CD4-positive, alpha-beta memory T cell (primary cell): ENCODE measurements at regions of chr12 and their contacts with region 1.

Region 1: GRCh38 chr12:112012775-112013600 is at the starts of genes ERP29 and TMEM116:
- DNase-seq: peak; percentile 98 to 100 (median 99)
- H3K4me3 ChIP-seq: peak within 1 kb of the TSS; percentile 94 to 99
- H3K4me3 Mint-ChIP-seq: peak within 1 kb of the TSS; percentile 87 to 98 (median 94)
- H3K27ac ChIP-seq: peak within 1 kb of the TSS; percentile 97
- H3K27ac Mint-ChIP-seq: peak within 1 kb of the TSS; percentile 96 to 99 (median 99)
- H3K4me1 ChIP-seq: peaks cover 79% of the 10 kb centered on the region
- H3K4me1 Mint-ChIP-seq: peaks cover 39 to 73% (median 56%) of the 10 kb centered on the region in 4 donors
- H3K27me3 ChIP-seq: no peaks in the 10 kb centered on the region
- H3K27me3 Mint-ChIP-seq: no peaks in the 10 kb centered on the region
- total RNA-seq, gene ERP29: 183 to 184 TPM
- total RNA-seq, gene TMEM116: 47.3 to 50.6 TPM

Region 2: GRCh38 chr12:111841750-111842555 is 171.0 kb before region 1 on chr12 and contains the start of gene MAPKAPK5:
- CTCF ChIA-PET with region 1: interaction called, 4 read pairs
- POLR2A ChIA-PET with region 1: interaction called, 29 read pairs
- intact Hi-C with region 1: loop called (anchors 2 kb)
- DNase-seq: peak; percentile 96 to 99 (median 97)
- H3K4me3 ChIP-seq: peak within 1 kb of the TSS; percentile 95 to 97
- H3K4me3 Mint-ChIP-seq: peak within 1 kb of the TSS; percentile 96 to 99 (median 99)
- H3K27ac ChIP-seq: peak within 1 kb of the TSS; percentile 84
- H3K27ac Mint-ChIP-seq: peak within 1 kb of the TSS; percentile 98 to 100 (median 100)
- H3K4me1 ChIP-seq: peaks cover 46% of the 10 kb centered on the region
- H3K4me1 Mint-ChIP-seq: peaks cover 42 to 80% (median 58%) of the 10 kb centered on the region in 4 donors
- H3K27me3 ChIP-seq: no peaks in the 10 kb centered on the region
- H3K27me3 Mint-ChIP-seq: peaks cover 0 to 1% of the 10 kb centered on the region in 2 donors
- total RNA-seq, gene MAPKAPK5: 59.6 to 68.1 TPM

Region 3: DNA sequence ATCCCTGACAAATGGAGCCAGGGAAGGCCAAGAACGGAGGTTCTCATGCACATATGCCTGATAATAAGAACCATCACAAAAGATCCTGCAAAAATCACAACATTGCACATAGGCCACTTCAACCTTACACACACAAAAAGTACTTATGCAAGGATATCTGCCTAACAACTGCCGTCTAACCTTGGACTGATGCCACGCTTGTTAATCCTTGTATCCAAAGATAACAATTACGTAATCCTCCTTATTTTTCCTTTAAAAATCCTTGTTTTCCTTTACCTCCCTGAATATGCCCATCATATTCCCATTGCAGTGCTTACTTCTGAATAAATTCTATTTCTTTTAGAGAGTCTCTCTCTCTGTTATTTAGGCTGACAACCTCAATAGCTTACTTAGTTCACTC is 59.5 kb before region 1 on chr12:
- CTCF ChIA-PET with region 1: interaction called, 7 read pairs
- POLR2A ChIA-PET with region 1: interaction called, 37 read pairs
- intact Hi-C with region 1: no loop called
- DNase-seq: no peak
- H3K4me3 ChIP-seq: no peak overlapping the region
- H3K4me3 Mint-ChIP-seq: no peak overlapping the region
- H3K27ac ChIP-seq: no peak overlapping the region
- H3K27ac Mint-ChIP-seq: peak overlapping the region in 2 of 7 donors; percentile 11 to 62
- H3K4me1 ChIP-seq: peaks cover 34% of the 10 kb centered on the region
- H3K4me1 Mint-ChIP-seq: peaks cover 32 to 51% (median 37%) of the 10 kb centered on the region in 4 donors
- H3K27me3 ChIP-seq: no peaks in the 10 kb centered on the region
- H3K27me3 Mint-ChIP-seq: no peaks in the 10 kb centered on the region

Region 4: GRCh38 chr12:111993292-111994150 is 19.5 kb before region 1 on chr12:
- CTCF ChIA-PET with region 1: interaction called, 49 read pairs
- POLR2A ChIA-PET with region 1: interaction called, 344 read pairs
- intact Hi-C with region 1: loop called (anchors 1 kb)
- DNase-seq: peak; percentile 63 to 71 (median 67)
- H3K4me3 ChIP-seq: peak overlapping the region in 1 of 2 donors; percentile 55
- H3K4me3 Mint-ChIP-seq: peak overlapping the region; percentile 87 to 96 (median 92)
- H3K27ac ChIP-seq: peak overlapping the region; percentile 52
- H3K27ac Mint-ChIP-seq: peak overlapping the region; percentile 80 to 97 (median 92)
- H3K4me1 ChIP-seq: peaks cover 83% of the 10 kb centered on the region
- H3K4me1 Mint-ChIP-seq: peaks cover 50 to 88% (median 66%) of the 10 kb centered on the region in 4 donors
- H3K27me3 ChIP-seq: no peaks in the 10 kb centered on the region
- H3K27me3 Mint-ChIP-seq: no peaks in the 10 kb centered on the region

Region 5: GRCh38 chr12:112108201-112109079 is 95.5 kb after region 1 on chr12 and contains the start of gene NAA25:
- CTCF ChIA-PET with region 1: no interaction called
- POLR2A ChIA-PET with region 1: interaction called, 21 read pairs
- intact Hi-C with region 1: loop called (anchors 1 kb)
- DNase-seq: peak; percentile 84 to 86 (median 84)
- H3K4me3 ChIP-seq: peak within 1 kb of the TSS; percentile 97 to 99
- H3K4me3 Mint-ChIP-seq: peak within 1 kb of the TSS; percentile 97 to 99 (median 98)
- H3K27ac ChIP-seq: peak within 1 kb of the TSS; percentile 94
- H3K27ac Mint-ChIP-seq: peak within 1 kb of the TSS; percentile 96 to 99 (median 97)
- H3K4me1 ChIP-seq: peaks cover 38% of the 10 kb centered on the region
- H3K4me1 Mint-ChIP-seq: peaks cover 29 to 57% (median 44%) of the 10 kb centered on the region in 4 donors
- H3K27me3 ChIP-seq: no peaks in the 10 kb centered on the region
- H3K27me3 Mint-ChIP-seq: no peaks in the 10 kb centered on the region
- total RNA-seq, gene NAA25: 28.7 to 35.3 TPM

Region 6: DNA sequence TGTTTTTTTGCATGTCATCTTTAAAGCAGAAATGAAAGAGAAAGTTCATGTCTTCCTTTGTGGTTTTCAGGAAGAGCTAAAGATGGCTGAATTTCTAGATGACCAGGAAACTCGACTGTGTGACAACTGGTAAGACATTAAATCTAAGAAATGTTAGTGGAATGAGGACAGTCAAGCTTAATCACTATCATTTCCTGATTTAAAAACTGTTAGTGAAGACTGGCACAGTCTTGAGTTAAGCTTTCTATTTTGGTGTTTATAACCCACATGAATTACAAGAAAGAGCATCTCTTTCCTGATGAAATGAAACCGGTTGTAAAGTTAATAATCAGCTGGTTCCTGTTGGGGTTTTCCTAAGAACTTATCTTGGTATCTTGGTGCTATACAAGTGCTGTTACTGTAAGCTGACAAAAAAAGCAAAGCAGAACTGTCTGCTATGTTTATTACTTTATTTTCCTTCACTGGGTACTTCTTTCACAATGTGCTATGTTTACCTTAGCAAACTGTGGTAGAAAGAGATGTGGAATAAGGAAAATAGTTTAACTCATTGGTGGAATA is 117.5 kb after region 1 on chr12:
- CTCF ChIA-PET with region 1: interaction called, 6 read pairs
- POLR2A ChIA-PET with region 1: interaction called, 22 read pairs
- intact Hi-C with region 1: loop called (anchors 1 kb)
- DNase-seq: peak in 4 of 5 donors; percentile 68 to 82 (median 74)
- H3K4me3 ChIP-seq: peak overlapping the region; percentile 3 to 23
- H3K4me3 Mint-ChIP-seq: peak overlapping the region; percentile 31 to 82 (median 68)
- H3K27ac ChIP-seq: peak overlapping the region; percentile 61
- H3K27ac Mint-ChIP-seq: peak overlapping the region; percentile 66 to 95 (median 84)
- H3K4me1 ChIP-seq: peaks cover 77% of the 10 kb centered on the region
- H3K4me1 Mint-ChIP-seq: peaks cover 28 to 69% (median 53%) of the 10 kb centered on the region in 4 donors
- H3K27me3 ChIP-seq: no peaks in the 10 kb centered on the region
- H3K27me3 Mint-ChIP-seq: no peaks in the 10 kb centered on the region

Region 7: DNA sequence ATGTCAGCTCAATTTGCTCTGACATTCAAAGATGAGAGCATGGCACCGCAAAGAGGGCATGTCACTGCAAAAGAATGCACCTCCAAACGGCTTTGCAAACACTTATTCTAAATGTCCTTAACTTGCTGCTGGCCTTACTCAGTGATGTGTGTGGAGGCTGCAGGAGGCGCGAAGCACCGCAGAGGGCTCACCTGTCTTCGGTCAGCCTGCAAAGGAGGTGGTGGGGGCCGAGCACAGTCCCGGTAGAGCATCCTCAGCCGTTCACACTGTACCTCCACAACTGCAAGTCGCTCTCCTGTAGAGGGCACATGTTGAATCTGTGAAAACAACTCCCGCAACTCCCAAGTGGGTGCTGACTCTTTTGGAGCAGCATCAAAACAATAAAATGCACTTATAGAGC is 206.2 kb after region 1 on chr12:
- CTCF ChIA-PET with region 1: no interaction called
- POLR2A ChIA-PET with region 1: no interaction called
- intact Hi-C with region 1: no loop called
- DNase-seq: no peak
- H3K4me3 ChIP-seq: no peak overlapping the region
- H3K4me3 Mint-ChIP-seq: no peak overlapping the region
- H3K27ac ChIP-seq: no peak overlapping the region
- H3K27ac Mint-ChIP-seq: no peak overlapping the region
- H3K4me1 ChIP-seq: no peaks in the 10 kb centered on the region
- H3K4me1 Mint-ChIP-seq: no peaks in the 10 kb centered on the region
- H3K27me3 ChIP-seq: no peaks in the 10 kb centered on the region
- H3K27me3 Mint-ChIP-seq: no peaks in the 10 kb centered on the region